H1 (cell line): ENCODE measurements at regions of chr13 and their contacts with region 1.

Region 1: DNA sequence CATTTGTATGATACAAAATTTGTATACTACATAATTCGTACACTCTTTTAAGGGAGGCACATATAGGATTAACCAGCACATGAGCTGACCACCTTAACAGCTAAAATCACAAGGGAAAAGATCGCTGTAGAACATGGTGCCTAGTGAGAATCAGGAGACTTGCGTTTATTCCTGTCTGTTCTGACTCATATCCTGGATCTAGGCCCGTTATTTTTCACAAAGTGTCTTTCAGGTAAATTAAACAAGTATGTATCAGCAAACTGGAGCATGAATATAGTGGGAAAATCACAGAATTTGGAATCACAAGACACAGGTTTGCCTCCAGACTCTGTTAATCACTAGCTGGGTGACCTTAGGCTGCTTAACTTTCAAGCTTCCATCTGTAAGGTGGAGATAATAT is 47.5 kb upstream of the ESD start:
- DNase-seq: no peak
- H3K4me3 ChIP-seq: no peak overlapping the region
- H3K27ac ChIP-seq: no peak overlapping the region
- H3K4me1 ChIP-seq: no peaks in the 10 kb centered on the region
- H3K27me3 ChIP-seq: no peaks in the 10 kb centered on the region
- CTCF ChIP-seq: no peak
- EP300 ChIP-seq: no peak
- POLR2A ChIP-seq: no peak
- RAD21 ChIP-seq: no peak

Region 2: DNA sequence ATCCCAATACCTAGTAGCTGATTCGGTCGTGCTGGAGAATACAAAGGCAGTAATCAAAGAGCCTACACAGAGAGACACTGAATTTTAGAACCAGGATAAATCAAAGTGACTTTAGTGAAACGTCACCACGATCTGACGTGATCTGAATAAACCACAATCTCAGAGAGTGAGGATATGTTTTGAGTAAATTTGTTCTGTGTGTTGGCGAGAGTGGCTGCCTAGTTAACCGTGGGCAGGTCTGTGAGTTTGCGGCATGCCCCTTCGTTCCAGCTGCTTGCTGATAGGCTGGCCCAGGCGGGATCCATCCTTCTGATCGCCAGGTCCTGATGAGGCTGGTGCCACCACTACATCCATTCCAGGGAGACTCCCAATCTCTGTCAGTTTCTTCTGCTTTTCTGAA is 251.0 kb before region 1 on chr13:
- CTCF ChIA-PET with region 1: no interaction called
- POLR2A ChIA-PET with region 1: no interaction called
- DNase-seq: no peak
- H3K4me3 ChIP-seq: no peak overlapping the region
- H3K27ac ChIP-seq: no peak overlapping the region
- H3K4me1 ChIP-seq: peaks cover 0 to 4% (median 1%) of the 10 kb centered on the region in 4 experiments; a peak in 1 of 7 replicates
- H3K27me3 ChIP-seq: no peaks in the 10 kb centered on the region
- CTCF ChIP-seq: no peak
- EP300 ChIP-seq: no peak
- POLR2A ChIP-seq: no peak
- RAD21 ChIP-seq: no peak

Region 3: GRCh38 chr13:46831588-46832194 is 12.7 kb before region 1 on chr13:
- CTCF ChIA-PET with region 1: interaction called, 18 read pairs
- POLR2A ChIA-PET with region 1: no interaction called
- DNase-seq: peak in 1 of 2 experiments; percentile 67
- H3K4me3 ChIP-seq: no peak overlapping the region
- H3K27ac ChIP-seq: no peak overlapping the region
- H3K4me1 ChIP-seq: no peaks in the 10 kb centered on the region
- H3K27me3 ChIP-seq: no peaks in the 10 kb centered on the region
- CTCF ChIP-seq: peak in 2 of 3 experiments; percentile 54 to 65; a peak in 2 of 4 replicates
- EP300 ChIP-seq: no peak
- POLR2A ChIP-seq: no peak
- RAD21 ChIP-seq: peak; percentile 87 to 90

Region 4: DNA sequence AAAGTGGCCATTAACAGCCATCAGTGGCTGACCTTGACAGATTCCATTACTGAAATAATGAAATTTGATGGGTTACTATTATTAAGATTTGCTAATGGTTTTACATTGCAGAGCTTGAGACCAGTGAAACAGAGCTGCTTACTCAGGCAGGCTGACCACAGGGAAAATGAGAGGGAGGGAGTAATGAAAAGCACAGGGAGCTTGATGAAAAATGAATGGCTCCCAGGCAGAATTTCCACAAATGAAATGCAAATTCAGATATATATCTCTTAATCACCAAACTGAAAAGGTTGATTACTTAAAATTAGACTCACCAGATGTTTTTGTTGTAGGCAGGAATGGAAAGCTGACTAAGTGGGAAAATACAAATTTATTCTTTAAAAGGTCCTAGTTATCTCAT is 16.3 kb after region 1 on chr13:
- CTCF ChIA-PET with region 1: interaction called, 12 read pairs
- POLR2A ChIA-PET with region 1: no interaction called
- DNase-seq: no peak
- H3K4me3 ChIP-seq: no peak overlapping the region
- H3K27ac ChIP-seq: no peak overlapping the region
- H3K4me1 ChIP-seq: no peaks in the 10 kb centered on the region
- H3K27me3 ChIP-seq: no peaks in the 10 kb centered on the region
- CTCF ChIP-seq: no peak
- EP300 ChIP-seq: no peak
- POLR2A ChIP-seq: no peak
- RAD21 ChIP-seq: no peak

Region 5: DNA sequence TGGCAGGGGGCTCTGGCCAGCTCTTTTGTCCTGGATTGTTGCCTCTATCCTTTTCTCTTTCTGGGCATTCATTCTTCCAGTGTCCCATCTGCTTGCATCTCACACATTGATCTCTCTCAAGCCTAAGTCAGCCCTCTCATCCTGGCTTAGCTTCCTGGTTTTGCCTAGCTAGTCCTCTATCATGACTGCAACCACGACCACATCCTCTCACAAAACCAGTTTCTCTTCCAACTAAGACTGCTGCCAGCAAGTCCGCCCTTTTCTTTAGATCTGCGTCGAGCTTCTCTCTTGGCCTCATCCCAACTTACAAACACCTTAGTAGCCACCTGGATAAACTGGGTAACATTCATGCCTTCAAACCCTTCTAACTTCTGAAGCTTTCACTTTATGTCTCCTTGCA is 264.6 kb after region 1 on chr13:
- CTCF ChIA-PET with region 1: no interaction called
- POLR2A ChIA-PET with region 1: no interaction called
- DNase-seq: no peak
- H3K4me3 ChIP-seq: no peak overlapping the region
- H3K27ac ChIP-seq: no peak overlapping the region
- H3K4me1 ChIP-seq: peaks cover 0 to 22% (median 5%) of the 10 kb centered on the region in 4 experiments; a peak in 5 of 7 replicates
- H3K27me3 ChIP-seq: no peaks in the 10 kb centered on the region
- CTCF ChIP-seq: no peak
- EP300 ChIP-seq: no peak
- POLR2A ChIP-seq: no peak
- RAD21 ChIP-seq: no peak